Mucosa of descending colon (tissue), 3 donors: ENCODE measurements at regions of chr15 and their contacts with region 1.

Region 1: GRCh38 chr15:65192016-65192415 is 6.9 kb upstream of the CLPX start:
- DNase-seq: no peak
- ATAC-seq: no peak
- H3K4me3 ChIP-seq: no peak overlapping the region
- H3K4me1 ChIP-seq: no peaks in the 10 kb centered on the region
- CTCF ChIP-seq: no peak

Region 2: DNA sequence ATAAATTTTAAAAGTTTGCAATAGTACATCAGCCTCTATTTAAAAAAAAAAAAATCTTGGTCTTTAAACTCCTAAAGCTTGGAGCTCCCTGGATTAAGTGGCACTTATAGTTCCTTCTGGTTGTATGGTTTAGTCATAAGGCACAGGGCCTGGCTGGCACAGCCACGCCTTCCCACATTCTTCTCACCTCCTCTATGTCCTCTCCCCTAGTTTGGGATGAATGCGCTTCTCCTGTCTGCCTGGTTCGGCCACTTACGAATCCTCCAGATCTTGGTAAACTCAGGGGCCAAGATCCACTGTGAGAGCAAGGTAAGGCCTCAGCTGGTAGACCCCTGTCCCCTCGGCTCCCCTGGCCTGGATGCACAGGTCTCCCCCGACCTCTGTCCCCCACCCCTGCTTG is 270.3 kb before region 1 on chr15:
- intact Hi-C with region 1: no loop called
- DNase-seq: no peak
- ATAC-seq: no peak
- H3K4me3 ChIP-seq: no peak overlapping the region
- H3K4me1 ChIP-seq: no peaks in the 10 kb centered on the region
- CTCF ChIP-seq: no peak

Region 3: GRCh38 chr15:65249641-65250040 is 57.6 kb after region 1 on chr15:
- intact Hi-C with region 1: loop called in 1 of 2 experiments (anchors 10 kb)
- DNase-seq: no peak
- ATAC-seq: no peak
- H3K4me3 ChIP-seq: no peak overlapping the region
- H3K4me1 ChIP-seq: no peaks in the 10 kb centered on the region
- CTCF ChIP-seq: no peak

Region 4: GRCh38 chr15:65275728-65276126 is 83.7 kb after region 1 on chr15:
- intact Hi-C with region 1: loop called (anchors 5 kb)
- DNase-seq: no peak
- ATAC-seq: peak; percentile 60
- H3K4me3 ChIP-seq: no peak overlapping the region
- H3K4me1 ChIP-seq: peaks cover 9% of the 10 kb centered on the region
- CTCF ChIP-seq: no peak

Region 5: GRCh38 chr15:65323071-65323511 is 131.1 kb after region 1 on chr15:
- intact Hi-C with region 1: no loop called
- DNase-seq: no peak
- ATAC-seq: no peak
- H3K4me3 ChIP-seq: no peak overlapping the region
- H3K4me1 ChIP-seq: no peaks in the 10 kb centered on the region
- CTCF ChIP-seq: no peak